ENCODE measurements at regions of chr10 and their contacts with region 1.

Region 1: DNA sequence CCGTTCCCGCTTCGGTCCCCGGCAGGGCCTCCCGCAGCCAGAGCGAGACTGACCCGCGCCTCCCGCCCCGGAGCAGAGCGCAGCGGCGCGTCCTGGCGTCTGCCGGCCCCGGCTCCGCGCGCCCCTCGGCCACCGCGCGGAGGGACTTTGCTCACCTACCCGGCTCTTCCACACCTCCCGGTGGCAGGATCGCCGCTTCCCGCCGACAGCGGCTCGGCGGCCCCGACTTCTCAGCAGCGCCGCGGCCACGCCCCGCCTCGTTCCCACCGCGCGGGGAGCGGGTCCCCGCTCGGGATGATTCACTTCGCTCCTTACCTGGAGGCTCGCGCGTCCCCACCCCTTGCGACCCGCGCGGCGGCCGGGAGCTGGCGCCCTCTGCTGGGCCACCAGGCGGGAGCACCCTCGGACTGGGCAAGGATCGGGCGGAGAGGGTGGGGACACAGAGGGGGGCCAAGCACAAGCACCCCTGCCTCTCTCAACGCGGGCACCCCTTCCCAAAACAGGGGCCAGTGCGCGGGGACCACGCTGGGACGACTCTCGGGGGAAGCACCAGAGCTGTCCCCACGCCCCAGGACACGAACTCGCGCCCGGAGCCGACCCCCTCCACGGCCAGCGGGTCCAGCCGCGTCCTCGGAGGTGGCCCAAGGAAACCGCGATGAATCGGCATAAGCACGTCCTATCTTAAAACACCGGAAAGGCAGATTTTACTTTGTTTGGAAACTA is 101.0 kb upstream of the SVIL start:
- DNase-seq: peak; percentile 80 to 92 (median 81)
- H3K4me3 ChIP-seq: peak overlapping the region; percentile 43 to 98 (median 61)
- H3K27ac ChIP-seq: peak overlapping the region in 4 of 5 donors; percentile 81 to 97 (median 86)
- H3K4me1 ChIP-seq: peaks cover 4 to 18% of the 10 kb centered on the region in 2 donors
- H3K27me3 ChIP-seq: no peaks in the 10 kb centered on the region
- CTCF ChIP-seq: peak; percentile 69 to 93 (median 88)
- POLR2A ChIP-seq: peak in 1 of 2 donors; percentile 22

Region 2: GRCh38 chr10:29646238-29646902 is 89.4 kb before region 1 on chr10:
- intact Hi-C with region 1: loop called in 1 of 2 experiments (anchors 10 kb)
- DNase-seq: peak in 1 of 7 donors; percentile 59
- H3K4me3 ChIP-seq: no peak overlapping the region
- H3K27ac ChIP-seq: peak overlapping the region in 2 of 5 donors; percentile 75 to 76
- H3K4me1 ChIP-seq: peaks cover 24 to 60% of the 10 kb centered on the region in 2 donors
- H3K27me3 ChIP-seq: no peaks in the 10 kb centered on the region
- CTCF ChIP-seq: no peak
- POLR2A ChIP-seq: no peak

Region 3: GRCh38 chr10:29784175-29784773 is 48.5 kb after region 1 on chr10:
- intact Hi-C with region 1: no loop called
- DNase-seq: peak; percentile 58 to 88 (median 77)
- H3K4me3 ChIP-seq: no peak overlapping the region
- H3K27ac ChIP-seq: peak overlapping the region in 2 of 5 donors; percentile 58
- H3K4me1 ChIP-seq: no peaks in the 10 kb centered on the region
- H3K27me3 ChIP-seq: no peaks in the 10 kb centered on the region
- CTCF ChIP-seq: no peak
- POLR2A ChIP-seq: no peak

Region 4: DNA sequence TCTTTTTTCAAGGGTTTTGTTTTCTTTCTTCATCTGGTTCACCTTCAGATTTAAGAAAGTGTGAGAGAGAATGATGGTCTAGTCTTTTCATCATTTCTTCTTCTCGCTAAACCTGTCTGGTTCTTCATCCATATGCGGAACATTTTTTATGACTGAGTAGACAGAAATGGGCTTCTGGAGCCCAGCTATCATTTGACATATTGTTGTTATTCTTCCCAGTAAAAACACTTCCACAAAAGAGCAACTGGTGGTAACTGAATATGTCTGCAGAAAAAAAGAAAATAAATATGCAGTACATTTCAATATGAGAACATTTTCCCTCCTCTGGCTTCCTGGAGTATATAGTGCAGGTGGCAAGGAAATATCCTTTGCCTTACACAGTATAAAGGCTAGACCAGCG is 114.1 kb after region 1 on chr10:
- intact Hi-C with region 1: loop called in 1 of 2 experiments (anchors 5 kb)
- DNase-seq: no peak
- H3K4me3 ChIP-seq: peak overlapping the region in 1 of 4 donors; percentile 2
- H3K27ac ChIP-seq: peak overlapping the region in 1 of 5 donors; percentile 52
- H3K4me1 ChIP-seq: no peaks in the 10 kb centered on the region
- H3K27me3 ChIP-seq: no peaks in the 10 kb centered on the region
- CTCF ChIP-seq: no peak
- POLR2A ChIP-seq: no peak

Region 5: DNA sequence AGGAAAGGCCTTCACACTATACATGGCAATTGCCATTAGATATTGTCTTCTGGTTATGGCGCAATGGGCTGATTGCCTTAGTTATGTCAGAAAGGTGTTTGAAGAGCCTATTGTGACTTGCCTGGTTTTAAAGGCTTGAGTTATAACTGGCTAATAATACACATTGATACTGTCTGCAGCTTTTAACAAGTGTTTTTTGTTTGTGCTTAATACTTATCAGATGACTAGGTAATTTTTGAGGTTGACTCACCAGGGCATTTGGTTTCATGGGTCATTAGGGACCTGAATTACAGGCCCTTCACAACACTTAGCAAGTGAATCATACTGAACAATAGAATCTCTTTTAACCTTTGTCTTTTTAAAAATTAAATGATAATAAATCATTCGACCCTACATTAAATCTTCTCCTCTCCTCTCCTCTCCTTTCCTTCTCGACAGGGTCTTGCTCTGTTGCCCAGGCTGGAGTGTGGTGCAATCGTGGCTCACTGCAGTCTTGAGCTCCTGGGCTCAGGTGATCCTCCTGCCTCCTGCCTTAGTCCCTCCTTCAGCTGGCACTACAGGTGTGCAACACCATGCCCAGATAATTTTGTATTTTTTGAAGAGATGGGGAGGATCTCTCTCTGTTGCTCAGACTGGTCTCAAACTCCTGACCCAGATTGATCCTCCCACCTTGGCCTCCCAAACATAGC is 127.3 kb after region 1 on chr10:
- intact Hi-C with region 1: loop called (anchors 5 to 10 kb)
- DNase-seq: no peak
- H3K4me3 ChIP-seq: no peak overlapping the region
- H3K27ac ChIP-seq: no peak overlapping the region
- H3K4me1 ChIP-seq: peaks cover 0 to 3% of the 10 kb centered on the region in 2 donors
- H3K27me3 ChIP-seq: no peaks in the 10 kb centered on the region
- CTCF ChIP-seq: no peak
- POLR2A ChIP-seq: no peak

Region 6: GRCh38 chr10:30013757-30014156 is 278.0 kb after region 1 on chr10:
- intact Hi-C with region 1: no loop called
- DNase-seq: peak; percentile 54 to 87 (median 75)
- H3K4me3 ChIP-seq: no peak overlapping the region
- H3K27ac ChIP-seq: peak overlapping the region in 1 of 5 donors; percentile 41
- H3K4me1 ChIP-seq: peaks cover 9 to 12% of the 10 kb centered on the region in 2 donors
- H3K27me3 ChIP-seq: no peaks in the 10 kb centered on the region
- CTCF ChIP-seq: no peak
- POLR2A ChIP-seq: no peak

Region 7: DNA sequence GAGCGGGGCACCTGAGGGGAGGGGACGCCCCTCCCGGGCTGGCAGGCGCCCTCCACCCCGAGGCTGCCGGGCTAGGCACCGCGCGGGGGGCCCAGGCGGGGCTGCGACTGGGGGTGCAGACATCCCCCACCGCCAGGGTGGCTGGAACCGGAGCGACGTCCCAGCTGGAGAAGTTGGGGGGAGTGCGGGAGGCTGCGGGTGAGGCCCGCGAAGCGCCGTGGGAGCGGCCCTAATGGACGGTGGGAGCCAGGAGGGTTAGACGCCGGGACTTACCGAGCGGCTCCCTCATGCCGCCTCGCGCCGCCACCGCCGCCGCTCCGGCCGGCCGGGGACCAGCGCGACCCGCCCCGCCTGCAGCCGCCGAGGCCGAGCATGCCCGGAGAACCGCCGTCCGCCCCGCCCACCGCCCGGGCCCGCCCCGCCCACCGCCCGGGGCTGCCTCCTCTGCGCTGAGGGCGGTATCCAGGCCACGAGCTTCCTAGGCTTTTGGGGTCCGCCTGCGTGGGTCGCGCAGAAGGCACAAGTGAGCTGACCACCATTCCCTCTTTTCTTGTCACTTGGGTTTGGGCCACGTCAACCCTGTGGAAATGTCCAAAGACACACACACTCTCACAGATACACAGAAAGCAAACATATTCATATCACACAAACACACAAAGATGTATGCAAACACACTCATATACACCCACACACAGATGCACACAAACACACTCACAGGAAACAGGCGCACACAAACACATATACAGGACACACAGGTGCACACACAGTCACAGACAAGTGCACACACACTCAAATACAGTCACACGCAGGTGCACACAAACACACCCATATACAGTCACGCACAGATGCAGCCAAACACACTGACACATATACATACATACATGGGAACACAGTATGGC is 323.7 kb after region 1 on chr10 and contains the start of gene JCAD:
- intact Hi-C with region 1: no loop called
- DNase-seq: peak; percentile 51 to 83 (median 78)
- H3K4me3 ChIP-seq: peak within 1 kb of the TSS; percentile 28 to 89 (median 50)
- H3K27ac ChIP-seq: peak within 1 kb of the TSS in 4 of 5 donors; percentile 35 to 91 (median 72)
- H3K4me1 ChIP-seq: peaks cover 3 to 4% of the 10 kb centered on the region in 2 donors
- H3K27me3 ChIP-seq: no peaks in the 10 kb centered on the region
- CTCF ChIP-seq: peak in 1 of 6 experiments; percentile 21
- POLR2A ChIP-seq: peak in 1 of 2 donors; percentile 50
- total RNA-seq, gene JCAD: 10.7 to 53.5 (median 24.7) TPM